Ascending aorta (tissue), 2 donors: ENCODE measurements at regions of chr4 and their contacts with region 1.

Region 1: DNA sequence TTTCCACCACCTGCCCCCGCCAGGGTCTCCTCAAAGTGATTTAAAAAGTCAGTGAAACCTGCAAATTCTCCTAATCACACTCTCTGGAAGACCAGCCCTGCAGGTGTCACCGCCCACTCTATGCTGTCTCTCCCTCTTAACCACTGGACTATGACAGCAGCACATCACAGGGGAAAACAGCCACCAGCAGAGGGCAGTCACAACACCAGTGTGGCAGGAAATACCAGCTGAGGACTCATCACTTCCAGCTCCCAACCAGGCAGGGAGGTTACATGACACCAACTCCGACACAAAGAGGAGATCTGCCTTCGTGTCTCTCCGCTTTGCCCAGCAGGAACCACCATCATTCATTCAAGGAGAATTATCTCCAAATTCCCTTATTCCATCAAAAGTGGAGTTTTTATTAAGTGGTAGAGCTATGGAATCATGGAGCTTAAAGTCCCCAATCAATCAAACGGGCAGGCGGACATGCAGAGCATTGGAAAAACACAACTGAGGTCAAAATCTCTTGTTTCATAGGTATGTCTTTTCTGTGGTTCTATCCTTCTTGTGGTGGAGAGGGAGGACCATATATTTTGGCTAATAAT is 91.3 kb downstream of the NSUN7 start:
- DNase-seq: peak; percentile 36 to 91
- H3K4me3 ChIP-seq: no peak overlapping the region
- H3K27ac ChIP-seq: no peak overlapping the region
- H3K4me1 ChIP-seq: peaks cover 0 to 28% of the 10 kb centered on the region in 2 donors
- H3K27me3 ChIP-seq: no peaks in the 10 kb centered on the region
- CTCF ChIP-seq: peak; percentile 42 to 69 (median 55)

Region 2: DNA sequence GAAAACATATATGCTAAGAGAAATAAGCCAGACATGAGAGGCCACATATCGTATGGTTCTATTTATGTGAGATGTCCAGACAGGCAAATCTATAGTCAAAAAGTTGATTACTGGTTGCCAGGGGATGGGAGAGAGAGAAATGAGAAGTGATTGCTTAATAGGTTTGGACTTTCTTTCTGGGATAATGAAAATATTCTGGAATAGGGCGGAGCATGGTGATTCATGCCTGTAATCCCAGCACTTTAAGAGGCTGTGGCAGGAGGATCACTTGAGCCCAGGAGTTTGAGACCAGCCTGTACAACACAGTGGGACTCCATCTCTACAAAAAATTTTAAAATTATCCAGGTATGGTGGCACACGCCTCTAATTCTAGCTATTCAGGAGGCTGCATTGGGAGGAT is 233.9 kb before region 1 on chr4:
- intact Hi-C with region 1: no loop called
- DNase-seq: no peak
- H3K4me3 ChIP-seq: no peak overlapping the region
- H3K27ac ChIP-seq: no peak overlapping the region
- H3K4me1 ChIP-seq: no peaks in the 10 kb centered on the region
- H3K27me3 ChIP-seq: no peaks in the 10 kb centered on the region
- CTCF ChIP-seq: no peak

Region 3: GRCh38 chr4:40881851-40882250 is 40.8 kb after region 1 on chr4:
- intact Hi-C with region 1: loop called (anchors 5 kb)
- DNase-seq: no peak
- H3K4me3 ChIP-seq: no peak overlapping the region
- H3K27ac ChIP-seq: peak overlapping the region; percentile 20
- H3K4me1 ChIP-seq: peaks cover 3 to 14% of the 10 kb centered on the region in 2 donors
- H3K27me3 ChIP-seq: no peaks in the 10 kb centered on the region
- CTCF ChIP-seq: no peak

Region 4: DNA sequence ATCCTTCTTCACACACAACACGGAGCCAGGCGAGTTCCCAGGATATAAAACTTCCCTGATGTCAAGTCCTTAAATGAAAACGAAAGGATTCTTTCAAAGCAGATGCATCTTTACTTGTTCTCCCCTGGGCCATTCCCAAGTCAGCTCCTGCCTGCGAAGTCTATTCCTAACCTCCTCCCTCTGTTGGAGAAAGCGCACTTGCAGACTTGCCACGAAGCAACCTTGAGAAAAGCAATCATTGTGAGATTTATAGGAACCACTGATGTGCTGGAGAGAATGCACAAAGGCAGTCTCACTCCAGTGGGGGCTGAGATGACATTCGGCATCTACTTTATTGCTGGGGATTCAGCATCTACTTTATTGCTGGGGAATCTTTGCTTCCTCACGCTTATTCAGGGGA is 64.3 kb after region 1 on chr4:
- intact Hi-C with region 1: no loop called
- DNase-seq: no peak
- H3K4me3 ChIP-seq: no peak overlapping the region
- H3K27ac ChIP-seq: no peak overlapping the region
- H3K4me1 ChIP-seq: peaks cover 12 to 20% of the 10 kb centered on the region in 2 donors
- H3K27me3 ChIP-seq: no peaks in the 10 kb centered on the region
- CTCF ChIP-seq: no peak

Region 5: DNA sequence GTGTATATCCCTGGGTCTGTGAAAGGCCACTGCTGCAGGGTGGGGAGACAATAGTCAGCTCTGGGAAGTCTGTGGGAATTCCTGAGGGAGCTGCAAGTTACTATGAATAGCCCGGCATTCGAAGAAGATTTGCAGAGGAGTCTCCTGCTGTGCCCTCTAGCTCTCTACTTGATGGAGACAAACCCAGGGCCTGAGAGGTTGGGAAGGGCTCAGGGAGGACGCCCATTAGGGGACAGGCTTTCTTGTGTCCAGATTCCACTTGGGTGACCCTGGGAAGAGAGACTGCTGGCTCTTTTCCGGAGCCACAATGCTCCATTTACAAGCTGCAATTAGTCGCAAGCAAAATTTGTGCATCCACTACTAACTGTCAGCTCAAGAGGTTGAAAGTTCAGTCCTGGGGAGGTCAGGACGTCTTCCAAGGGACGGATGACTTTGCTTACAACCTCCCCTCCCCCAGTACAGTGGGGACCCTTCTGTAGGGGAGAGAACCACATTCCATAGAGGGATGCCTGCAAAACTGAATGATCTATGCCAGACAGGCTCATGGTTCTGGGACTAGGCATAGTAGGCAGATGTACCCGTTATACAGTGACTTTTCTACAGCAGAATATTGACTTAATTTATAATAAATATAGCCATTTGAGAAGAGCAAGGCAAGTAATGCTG is 955.6 kb after region 1 on chr4:
- intact Hi-C with region 1: no loop called
- DNase-seq: no peak
- H3K4me3 ChIP-seq: no peak overlapping the region
- H3K27ac ChIP-seq: no peak overlapping the region
- H3K4me1 ChIP-seq: no peaks in the 10 kb centered on the region
- H3K27me3 ChIP-seq: no peaks in the 10 kb centered on the region
- CTCF ChIP-seq: no peak

Region 6: GRCh38 chr4:42396752-42397634 is 1555.9 kb after region 1 on chr4 and contains the start of gene SHISA3:
- intact Hi-C with region 1: loop called (anchors 10 kb)
- DNase-seq: peak in 1 of 2 donors; percentile 66
- H3K4me3 ChIP-seq: peak within 1 kb of the TSS; percentile 54 to 63
- H3K27ac ChIP-seq: peak within 1 kb of the TSS in 1 of 2 donors; percentile 20
- H3K4me1 ChIP-seq: peaks cover 0 to 12% of the 10 kb centered on the region in 2 donors
- H3K27me3 ChIP-seq: no peaks in the 10 kb centered on the region
- CTCF ChIP-seq: no peak
- total RNA-seq, gene SHISA3: 23.6 TPM